Dorsolateral prefrontal cortex (tissue), 120 donors: ENCODE measurements at regions of chr20 and their contacts with region 1.

Region 1: GRCh38 chr20:56343861-56344381 is 14.9 kb upstream of the FAM210B start:
- DNase-seq: peak in 7 of 10 donors; percentile 39 to 74 (median 50)
- H3K4me3 ChIP-seq: peak overlapping the region in 57 of 59 donors; percentile 8 to 66 (median 43)
- H3K27ac ChIP-seq: no peak overlapping the region
- H3K27me3 ChIP-seq: peaks cover 0 to 24% (median 6%) of the 10 kb centered on the region in 45 donors
- CTCF ChIP-seq: peak; percentile 22 to 88 (median 78)

Region 2: GRCh38 chr20:56187534-56188198 is 156.3 kb before region 1 on chr20:
- intact Hi-C with region 1: loop called in 1 of 2 experiments (anchors 10 kb)
- DNase-seq: peak in 2 of 10 donors; percentile 8 to 22
- H3K4me3 ChIP-seq: peak overlapping the region in 2 of 59 donors; percentile 7 to 22
- H3K27ac ChIP-seq: no peak overlapping the region
- H3K27me3 ChIP-seq: peaks cover 0 to 4% (median 0%) of the 10 kb centered on the region in 45 donors
- CTCF ChIP-seq: peak in 48 of 56 donors; percentile 15 to 65 (median 42)

Region 3: GRCh38 chr20:56202493-56203077 is 141.3 kb before region 1 on chr20:
- intact Hi-C with region 1: loop called in 1 of 2 experiments (anchors 5 kb)
- DNase-seq: no peak
- H3K4me3 ChIP-seq: no peak overlapping the region
- H3K27ac ChIP-seq: no peak overlapping the region
- H3K27me3 ChIP-seq: peaks cover 0 to 18% (median 0%) of the 10 kb centered on the region in 45 donors
- CTCF ChIP-seq: peak in 53 of 56 donors; percentile 32 to 68 (median 50)

Region 4: DNA sequence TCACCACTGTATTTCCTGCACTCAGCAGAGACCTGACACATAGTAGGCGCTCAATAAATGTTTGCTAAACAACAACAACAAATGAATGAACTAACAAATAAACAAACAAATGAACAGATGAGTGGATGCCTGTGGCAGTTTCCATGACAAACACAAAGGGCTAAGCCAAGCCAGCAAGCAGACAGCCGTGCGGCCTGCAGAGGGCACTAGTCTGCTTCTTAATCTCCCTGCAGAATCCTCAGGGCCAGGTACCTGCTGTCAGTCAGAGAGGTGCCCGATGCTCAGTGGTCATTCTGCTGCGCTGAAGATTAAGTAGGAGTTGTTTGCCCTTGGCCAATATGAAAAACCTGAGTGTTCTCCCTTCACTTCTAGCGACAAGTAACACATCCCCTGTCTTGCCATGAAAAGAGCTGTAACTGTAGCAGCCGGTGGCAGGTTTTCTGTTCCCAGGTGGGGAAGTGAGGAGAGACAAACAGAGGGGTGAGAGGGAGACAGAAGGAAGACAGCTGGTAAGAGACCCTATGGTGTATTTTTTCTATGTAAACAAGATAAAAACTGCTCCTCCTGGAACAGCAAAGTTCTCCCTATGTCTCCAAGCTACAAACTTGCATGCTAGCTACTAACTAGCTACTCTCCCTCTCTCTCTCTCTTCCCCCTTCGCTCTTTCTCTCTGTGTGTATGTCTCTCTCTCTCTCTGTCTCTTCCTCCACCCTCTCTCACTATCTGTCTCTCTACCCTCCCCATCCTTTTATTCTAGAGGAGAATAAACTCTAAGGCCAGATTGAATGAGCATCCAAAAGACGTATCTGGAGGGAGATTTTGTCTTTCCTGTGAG is 95.8 kb before region 1 on chr20 and contains the start of gene MC3R:
- intact Hi-C with region 1: loop called in 1 of 2 experiments (anchors 2 kb)
- DNase-seq: peak in 9 of 10 donors; percentile 11 to 71 (median 61)
- H3K4me3 ChIP-seq: no peak within 1 kb of the TSS
- H3K27ac ChIP-seq: no peak within 1 kb of the TSS
- H3K27me3 ChIP-seq: peaks cover 0 to 89% (median 23%) of the 10 kb centered on the region in 45 donors
- CTCF ChIP-seq: peak; percentile 33 to 78 (median 66)
- total RNA-seq, gene MC3R: 0.47 to 0.76 (median 0.58) TPM in 8 of 120 experiments, not detected in the others